ENCODE measurements at regions of chr12 and their contacts with region 1.

Region 1: DNA sequence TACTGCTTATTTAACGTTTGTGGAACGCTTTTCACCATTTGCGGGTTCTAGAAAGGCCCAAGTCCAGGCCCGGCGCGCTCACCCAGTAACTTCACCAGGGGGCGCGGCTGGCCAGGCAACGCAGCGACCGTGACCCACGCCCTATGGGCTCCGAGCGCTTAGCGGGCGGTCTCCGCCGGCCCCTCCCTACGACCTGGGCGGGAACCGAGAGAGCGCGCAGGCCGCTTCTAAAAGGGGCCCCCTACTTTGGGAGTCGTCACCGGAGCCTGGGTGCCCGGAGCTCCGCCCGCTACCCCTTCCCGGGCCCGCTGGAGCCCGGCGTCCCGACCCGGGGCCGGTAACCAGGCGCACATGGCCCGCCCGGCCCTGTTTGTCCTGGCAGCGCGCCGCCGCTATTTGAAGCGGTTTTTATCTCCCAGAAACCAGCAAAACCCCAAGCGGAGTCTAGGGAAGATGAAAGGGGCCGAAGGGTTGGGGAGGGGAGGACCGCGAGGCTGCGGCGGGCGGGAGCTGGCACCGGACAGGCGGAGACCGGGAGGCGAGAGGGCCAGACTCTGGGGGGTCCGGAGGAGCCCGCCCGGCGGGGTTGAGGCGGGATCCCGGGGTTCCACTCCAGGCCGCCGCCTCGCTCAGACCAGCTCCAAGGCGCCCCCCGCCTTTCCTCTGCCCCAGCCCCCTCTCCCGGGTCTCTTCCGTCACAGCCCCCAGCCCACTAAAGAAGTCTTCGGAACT is 3.5 kb upstream of the AAAS start:
- DNase-seq: peak; percentile 94 to 96
- H3K4me3 ChIP-seq: peak overlapping the region; percentile 69 to 84
- H3K27ac ChIP-seq: peak overlapping the region; percentile 90 to 91
- H3K4me1 ChIP-seq: peaks cover 8 to 37% (median 21%) of the 10 kb centered on the region in 4 donors
- H3K27me3 ChIP-seq: no peaks in the 10 kb centered on the region
- CTCF ChIP-seq: peak; percentile 80 to 81

Region 2: GRCh38 chr12:52604859-52605258 is 720.1 kb before region 1 on chr12:
- intact Hi-C with region 1: no loop called
- DNase-seq: no peak
- H3K4me3 ChIP-seq: no peak overlapping the region
- H3K27ac ChIP-seq: no peak overlapping the region
- H3K4me1 ChIP-seq: no peaks in the 10 kb centered on the region
- H3K27me3 ChIP-seq: peaks cover 0 to 42% of the 10 kb centered on the region in 2 donors
- CTCF ChIP-seq: no peak

Region 3: GRCh38 chr12:53344824-53345485 is 20.0 kb after region 1 on chr12:
- intact Hi-C with region 1: loop called (anchors 2 kb)
- DNase-seq: peak; percentile 74 to 84
- H3K4me3 ChIP-seq: peak overlapping the region; percentile 60 to 65
- H3K27ac ChIP-seq: peak overlapping the region; percentile 73 to 82
- H3K4me1 ChIP-seq: peaks cover 0 to 14% (median 12%) of the 10 kb centered on the region in 4 donors
- H3K27me3 ChIP-seq: no peaks in the 10 kb centered on the region
- CTCF ChIP-seq: peak; percentile 76 to 77

Region 4: DNA sequence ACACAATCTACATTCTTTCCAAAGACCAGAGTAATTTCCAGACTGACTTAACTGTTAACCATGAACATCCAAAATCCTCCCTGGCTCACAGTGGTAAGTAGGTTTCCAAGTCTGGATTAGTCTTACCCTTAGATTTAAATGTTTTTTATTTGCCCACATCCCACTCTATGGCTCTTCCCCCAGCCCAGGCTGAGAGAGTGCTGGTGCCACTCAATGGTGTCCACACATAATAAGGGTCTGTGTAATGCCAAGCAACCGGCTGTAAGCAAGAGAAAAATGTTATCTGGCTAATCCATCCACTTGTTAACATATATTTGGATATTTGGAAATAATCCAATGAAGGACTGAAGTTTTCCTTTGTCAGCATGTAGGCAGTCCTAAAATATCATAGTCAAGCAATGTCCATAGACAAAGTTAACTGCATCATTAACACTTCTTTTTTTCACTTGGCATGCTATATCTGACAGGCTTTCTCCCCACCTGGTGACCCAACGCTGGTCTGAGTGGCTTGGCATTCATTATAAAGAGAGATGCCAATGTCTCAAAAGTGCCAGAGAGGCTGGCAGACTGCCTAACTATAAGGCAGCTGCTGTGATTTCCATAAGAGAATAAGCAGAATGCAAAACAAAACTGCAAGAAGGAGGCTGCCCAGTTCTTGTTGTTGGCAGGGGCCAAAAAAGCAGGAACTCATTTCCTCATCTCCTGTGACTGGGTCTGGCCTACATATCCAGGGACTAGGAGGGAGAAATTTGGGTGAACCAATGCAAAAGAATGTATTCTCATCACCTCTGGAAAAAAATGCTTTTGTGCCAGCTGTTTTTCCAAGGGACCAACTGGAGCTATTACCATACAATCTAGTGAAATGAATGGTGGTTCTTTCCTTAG is 599.8 kb after region 1 on chr12:
- intact Hi-C with region 1: no loop called
- DNase-seq: no peak
- H3K4me3 ChIP-seq: no peak overlapping the region
- H3K27ac ChIP-seq: no peak overlapping the region
- H3K4me1 ChIP-seq: peaks cover 0 to 11% (median 5%) of the 10 kb centered on the region in 4 donors
- H3K27me3 ChIP-seq: peaks cover 6 to 94% of the 10 kb centered on the region in 2 donors
- CTCF ChIP-seq: no peak